Aorta (tissue), 5 donors: ENCODE measurements at regions of chr5 and their contacts with region 1.

Region 1: DNA sequence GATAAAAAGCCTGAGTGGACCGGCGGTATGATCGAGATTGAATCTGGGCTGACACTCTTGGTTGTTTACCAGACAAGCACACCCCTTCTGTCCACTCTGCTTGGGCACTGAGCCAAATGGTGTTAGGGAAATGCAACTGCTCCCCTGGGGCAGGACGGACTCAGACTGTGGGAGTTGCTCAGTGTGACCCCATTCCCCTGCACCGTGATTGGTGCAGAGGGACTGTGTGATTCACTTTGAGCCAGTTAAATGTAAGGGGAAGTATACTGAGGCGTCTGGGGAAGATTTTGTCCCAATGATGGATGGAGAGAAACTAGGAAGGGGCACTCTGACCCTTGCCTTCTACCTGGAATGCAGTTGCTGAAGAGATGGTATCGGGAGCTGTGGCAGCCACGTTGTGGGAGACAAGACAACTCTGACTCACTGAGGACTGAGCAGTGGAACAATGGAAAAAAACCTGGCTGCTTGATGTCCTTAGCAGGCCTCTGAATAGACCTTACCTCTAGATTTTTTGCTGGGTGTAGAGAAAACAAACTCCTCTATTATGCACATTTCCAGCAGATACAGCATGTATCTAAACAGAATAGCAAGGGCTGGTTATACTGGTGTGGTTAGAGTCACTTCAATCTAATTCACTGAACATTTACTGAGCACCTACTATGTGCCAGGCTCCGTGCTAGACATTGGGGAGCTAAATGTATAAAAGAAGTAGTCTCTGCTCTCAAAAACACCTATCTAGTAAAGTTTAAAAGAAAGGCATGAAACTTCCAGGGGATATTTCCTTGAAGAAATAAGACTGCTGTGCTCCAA is 196.2 kb upstream of the ANKRD55 start:
- DNase-seq: no peak
- ATAC-seq: no peak
- H3K4me3 ChIP-seq: no peak overlapping the region
- H3K27ac ChIP-seq: no peak overlapping the region
- H3K4me1 ChIP-seq: peaks cover 0 to 5% of the 10 kb centered on the region in 2 donors
- H3K27me3 ChIP-seq: no peaks in the 10 kb centered on the region

Region 2: GRCh38 chr5:56481428-56482357 is 52.4 kb after region 1 on chr5:
- intact Hi-C with region 1: loop called in 1 of 2 experiments (anchors 10 kb)
- DNase-seq: peak in 1 of 2 donors; percentile 71
- ATAC-seq: peak; percentile 26
- H3K4me3 ChIP-seq: peak overlapping the region; percentile 66 to 71
- H3K27ac ChIP-seq: peak overlapping the region; percentile 69 to 94
- H3K4me1 ChIP-seq: peaks cover 0 to 3% of the 10 kb centered on the region in 2 donors
- H3K27me3 ChIP-seq: no peaks in the 10 kb centered on the region

Region 3: GRCh38 chr5:56763711-56764466 is 334.6 kb after region 1 on chr5:
- intact Hi-C with region 1: no loop called
- DNase-seq: no peak
- ATAC-seq: no peak
- H3K4me3 ChIP-seq: no peak overlapping the region
- H3K27ac ChIP-seq: no peak overlapping the region
- H3K4me1 ChIP-seq: no peaks in the 10 kb centered on the region
- H3K27me3 ChIP-seq: no peaks in the 10 kb centered on the region

Region 4: DNA sequence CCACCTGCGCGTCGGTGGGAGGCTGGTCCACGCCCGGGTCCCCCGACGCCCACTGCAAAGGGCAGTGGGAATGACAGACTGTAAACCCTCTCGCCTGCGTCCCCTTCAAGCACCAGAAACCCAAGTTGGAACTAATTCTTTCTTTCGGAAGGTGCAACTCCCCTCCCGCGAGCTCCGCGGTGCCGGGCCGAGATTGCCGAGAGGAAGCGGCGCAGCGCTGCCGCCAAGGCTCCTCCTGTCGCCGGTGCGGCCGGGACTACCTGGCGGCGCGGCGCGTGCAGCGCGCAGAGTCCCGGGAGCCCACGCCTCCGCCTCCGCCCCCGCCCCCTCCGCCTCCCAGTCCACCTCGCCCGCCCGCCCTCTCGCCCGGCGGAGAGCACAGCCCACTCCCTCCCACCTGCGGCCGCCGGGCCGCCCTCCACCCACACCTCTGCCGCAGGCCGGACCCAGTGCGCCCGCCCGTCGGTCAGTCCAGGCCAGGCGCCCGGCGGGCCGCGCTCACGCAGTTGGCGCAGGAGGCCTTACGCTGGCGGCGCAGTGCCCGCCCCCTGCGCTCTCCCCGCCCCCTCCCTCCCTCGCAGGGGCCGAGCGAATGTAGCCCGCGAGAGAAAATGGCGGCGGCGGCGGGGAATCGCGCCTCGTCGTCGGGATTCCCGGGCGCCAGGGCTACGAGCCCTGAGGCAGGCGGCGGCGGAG is 385.8 kb after region 1 on chr5 and contains the start of gene MAP3K1:
- intact Hi-C with region 1: loop called in 1 of 2 experiments (anchors 10 kb)
- DNase-seq: peak; percentile 87 to 93
- ATAC-seq: peak; percentile 94
- H3K4me3 ChIP-seq: peak within 1 kb of the TSS; percentile 90 to 97
- H3K27ac ChIP-seq: peak within 1 kb of the TSS; percentile 8 to 79
- H3K4me1 ChIP-seq: no peaks in the 10 kb centered on the region
- H3K27me3 ChIP-seq: no peaks in the 10 kb centered on the region
- total RNA-seq, gene MAP3K1: 11.2 to 26.3 TPM